Stomach (tissue), 19 donors: ENCODE measurements at regions of chr1 and their contacts with region 1.

Region 1: DNA sequence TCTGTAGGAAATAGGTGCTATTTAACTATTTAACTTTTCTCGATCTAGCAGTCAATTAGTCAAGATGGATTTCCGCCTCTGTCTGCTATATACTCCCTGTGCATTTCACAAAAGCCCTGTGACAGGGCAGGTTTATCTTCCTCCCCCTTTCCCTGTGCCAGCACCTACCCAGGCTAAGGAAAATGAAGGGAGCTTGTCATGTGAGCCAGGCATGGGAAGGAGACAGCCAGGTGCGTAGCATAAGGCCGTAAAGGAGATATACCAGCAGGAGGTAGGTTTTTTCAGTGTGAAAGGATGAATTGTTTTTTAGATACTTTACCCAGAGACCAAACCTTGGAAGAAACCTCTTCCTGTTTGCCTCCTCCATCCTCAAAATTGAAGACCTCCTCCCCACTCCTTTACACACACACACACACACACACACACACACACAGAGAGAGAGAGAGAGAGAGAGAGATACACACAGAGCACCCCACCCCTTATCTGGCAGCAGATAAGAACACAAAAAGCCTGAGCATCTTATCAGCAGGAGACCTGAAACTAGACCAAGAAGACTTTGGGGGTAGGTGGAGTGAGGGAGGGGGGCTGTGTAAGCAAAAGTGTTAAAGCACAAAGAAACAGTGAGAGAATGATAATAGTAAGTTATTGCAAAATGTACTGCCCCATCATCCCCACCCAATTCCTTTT is 12.0 kb upstream of the TARBP1 start:
- DNase-seq: no peak
- H3K4me3 ChIP-seq: no peak overlapping the region
- H3K27ac ChIP-seq: no peak overlapping the region
- H3K4me1 ChIP-seq: peaks cover 6 to 26% (median 13%) of the 10 kb centered on the region in 4 donors
- H3K27me3 ChIP-seq: no peaks in the 10 kb centered on the region
- CTCF ChIP-seq: no peak
- EP300 ChIP-seq: no peak
- POLR2A ChIP-seq: no peak

Region 2: DNA sequence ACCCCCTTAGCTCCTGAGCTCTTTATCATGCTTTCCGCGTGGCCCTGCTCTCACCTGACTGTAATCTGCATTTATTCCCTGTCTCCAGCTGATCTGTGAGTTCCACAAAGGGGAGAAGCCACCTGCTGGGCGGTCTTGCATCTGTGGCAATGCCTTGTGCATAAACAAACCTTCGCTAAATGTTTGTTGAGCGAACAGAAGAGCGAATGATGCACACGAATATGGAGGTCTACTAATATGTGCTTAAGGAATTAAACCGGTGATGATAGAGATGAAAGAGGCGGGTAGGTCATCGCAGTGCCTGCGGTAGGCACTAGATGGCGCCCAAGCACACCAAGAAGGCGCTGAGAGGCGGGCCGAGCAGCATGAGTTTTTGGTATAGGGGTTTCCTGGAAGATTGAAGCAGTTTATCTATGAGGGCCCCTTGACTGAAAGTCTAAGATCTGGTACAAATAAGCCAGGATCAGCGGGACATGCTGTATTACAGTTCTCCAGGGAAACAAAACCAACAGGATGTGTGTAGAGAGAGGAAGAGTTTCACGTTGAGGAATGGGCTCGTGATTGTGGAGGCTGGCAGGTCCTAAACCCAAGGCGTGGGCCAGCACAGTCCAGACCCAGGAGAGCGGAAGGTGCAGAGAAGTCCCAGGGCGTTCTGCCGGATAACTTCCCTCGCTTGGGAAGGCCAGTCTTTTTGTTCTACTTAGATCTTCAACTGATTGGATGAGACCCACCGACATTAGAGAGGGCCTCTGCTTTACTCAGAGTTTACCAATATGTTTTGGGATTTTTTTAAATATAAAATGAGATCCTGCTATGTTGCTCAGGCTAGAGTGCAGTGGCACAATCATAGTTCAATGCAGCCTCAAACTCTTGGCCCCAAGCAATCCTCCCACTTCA is 603.0 kb after region 1 on chr1:
- intact Hi-C with region 1: loop called (anchors 5 kb)
- DNase-seq: peak; percentile 86 to 91
- H3K4me3 ChIP-seq: peak overlapping the region in 3 of 4 donors; percentile 16 to 38 (median 26)
- H3K27ac ChIP-seq: no peak overlapping the region
- H3K4me1 ChIP-seq: peaks cover 8 to 16% (median 10%) of the 10 kb centered on the region in 4 donors
- H3K27me3 ChIP-seq: no peaks in the 10 kb centered on the region
- CTCF ChIP-seq: peak in 5 of 7 experiments; percentile 78 to 92 (median 86)
- EP300 ChIP-seq: no peak
- POLR2A ChIP-seq: no peak